HEK293T (cell line): ENCODE measurements at regions of chr17 and their contacts with region 1.

Region 1: DNA sequence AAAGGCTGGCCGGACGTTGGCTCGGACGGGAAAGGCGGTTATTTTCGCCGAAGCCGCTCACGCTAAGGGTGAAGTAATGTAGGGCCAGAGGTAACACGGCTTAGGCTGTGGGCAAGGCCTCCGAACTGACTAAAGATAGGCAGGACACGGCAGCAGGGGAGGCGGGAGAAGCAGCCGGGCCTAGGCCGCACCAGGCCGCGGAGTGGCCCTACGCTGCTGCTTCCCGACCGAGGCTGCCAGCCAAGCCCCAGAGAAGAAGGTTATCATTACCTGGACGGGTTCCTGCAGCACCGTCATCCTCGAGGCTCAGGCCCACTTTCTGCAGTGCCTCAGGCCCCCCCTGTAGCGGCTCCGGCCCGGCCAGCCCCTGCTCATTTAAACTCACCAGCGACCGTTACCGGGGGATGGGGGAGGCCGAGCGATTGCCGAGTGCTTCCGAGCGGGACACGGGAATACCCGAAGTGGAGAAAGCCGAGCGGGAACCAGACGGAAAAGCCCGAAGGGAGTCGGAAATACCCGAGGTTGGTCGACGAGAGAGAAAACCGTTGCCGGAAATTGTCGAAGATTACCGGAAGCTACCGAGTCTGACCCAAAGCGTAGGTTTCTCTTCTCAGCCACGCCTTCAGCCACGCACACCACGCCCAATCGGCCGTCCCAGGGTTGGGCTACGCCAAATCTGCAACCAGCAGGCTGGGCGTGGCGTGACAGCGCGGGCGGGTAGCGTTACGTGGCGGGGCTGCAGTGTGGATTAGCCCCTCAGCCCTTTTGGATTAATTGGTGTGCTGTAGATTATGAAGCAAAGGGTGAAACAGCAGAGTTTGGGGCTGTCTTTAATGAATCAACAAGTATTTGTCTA is at the start of gene CDC27:
- DNase-seq: peak; percentile 99

Region 2: DNA sequence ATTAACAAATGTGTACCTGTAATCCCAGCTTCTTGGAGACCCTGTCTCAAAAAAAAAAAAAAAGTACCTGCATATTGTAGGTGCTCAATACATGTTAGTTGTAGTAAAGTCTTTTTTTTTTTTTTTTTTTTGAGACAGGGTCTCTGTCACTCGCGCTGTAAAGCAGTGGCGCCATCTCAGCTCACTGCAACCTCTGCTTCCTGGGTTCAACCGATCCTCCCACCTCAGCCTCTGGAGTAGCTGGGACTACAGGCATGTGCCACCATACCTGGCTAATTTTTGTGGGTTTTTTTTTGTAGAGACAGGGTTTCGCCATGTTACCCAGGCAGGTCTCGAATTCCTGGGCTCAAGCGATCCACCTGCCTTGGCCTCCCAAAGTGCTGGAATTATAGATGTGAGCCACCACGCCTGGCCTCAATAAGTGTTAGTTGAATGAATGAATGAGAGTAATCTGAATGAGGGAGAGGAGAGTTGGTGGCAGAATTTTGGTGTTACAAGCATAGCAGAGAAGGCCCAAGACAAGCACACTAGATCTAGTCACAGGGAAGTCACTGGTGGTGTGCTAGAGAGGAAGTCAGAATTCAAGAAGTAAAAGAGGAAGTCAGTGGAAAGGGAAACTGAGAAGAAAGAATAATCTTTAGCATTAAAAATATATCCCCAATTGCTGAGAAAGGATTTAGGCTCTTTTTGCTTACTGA is 10.7 kb after region 1 on chr17:
- CTCF ChIA-PET with region 1: interaction called, 3 read pairs
- POLR2A ChIA-PET with region 1: interaction called, 20 read pairs
- DNase-seq: no peak